Thyroid gland (tissue), 4 donors: ENCODE measurements at regions of chr3 and their contacts with region 1.

Region 1: GRCh38 chr3:30112902-30113484 is 493.4 kb upstream of the TGFBR2 start:
- DNase-seq: no peak
- H3K4me3 ChIP-seq: no peak overlapping the region
- H3K27ac ChIP-seq: no peak overlapping the region
- H3K4me1 ChIP-seq: no peaks in the 10 kb centered on the region
- H3K27me3 ChIP-seq: no peaks in the 10 kb centered on the region
- CTCF ChIP-seq: peak; percentile 20 to 61 (median 47)
- POLR2A ChIP-seq: no peak

Region 2: GRCh38 chr3:30188713-30189112 is 75.7 kb after region 1 on chr3:
- intact Hi-C with region 1: no loop called
- DNase-seq: no peak
- H3K4me3 ChIP-seq: no peak overlapping the region
- H3K27ac ChIP-seq: no peak overlapping the region
- H3K4me1 ChIP-seq: no peaks in the 10 kb centered on the region
- H3K27me3 ChIP-seq: no peaks in the 10 kb centered on the region
- CTCF ChIP-seq: no peak
- POLR2A ChIP-seq: no peak

Region 3: DNA sequence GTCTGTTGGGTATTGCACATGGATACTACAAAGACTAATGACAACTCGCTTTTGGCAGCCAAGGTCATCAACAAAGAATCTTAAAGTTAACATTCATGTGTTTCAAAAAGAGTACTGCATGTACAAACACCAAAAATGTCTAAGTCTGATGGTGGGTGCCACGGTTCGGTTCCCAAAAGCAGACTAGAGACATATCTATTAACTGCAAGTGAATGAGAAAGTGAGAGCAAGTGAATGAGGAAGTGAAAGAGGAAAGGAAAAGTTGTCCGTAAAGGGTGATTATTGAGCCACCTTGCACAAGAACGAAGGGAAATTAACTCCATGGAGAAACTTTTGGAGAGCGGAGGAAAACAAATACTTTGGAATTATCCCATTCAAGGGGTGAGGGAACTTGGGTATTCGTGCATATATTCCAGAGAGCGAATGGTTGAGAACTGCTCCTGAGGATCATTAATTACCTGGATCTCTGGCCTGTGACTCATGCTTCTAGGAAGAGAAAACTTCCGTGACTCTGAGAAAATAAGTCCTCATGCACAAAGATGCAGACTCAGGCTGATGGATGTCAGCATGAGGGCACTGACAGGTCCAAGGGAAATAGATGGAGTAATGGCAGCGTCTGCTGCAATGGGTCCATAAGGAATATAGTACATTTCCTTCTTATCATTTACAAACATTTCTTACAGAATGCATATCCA is 156.9 kb after region 1 on chr3:
- intact Hi-C with region 1: no loop called
- DNase-seq: no peak
- H3K4me3 ChIP-seq: no peak overlapping the region
- H3K27ac ChIP-seq: no peak overlapping the region
- H3K4me1 ChIP-seq: no peaks in the 10 kb centered on the region
- H3K27me3 ChIP-seq: no peaks in the 10 kb centered on the region
- CTCF ChIP-seq: no peak
- POLR2A ChIP-seq: no peak

Region 4: GRCh38 chr3:30370681-30371271 is 257.8 kb after region 1 on chr3:
- intact Hi-C with region 1: no loop called
- DNase-seq: no peak
- H3K4me3 ChIP-seq: no peak overlapping the region
- H3K27ac ChIP-seq: no peak overlapping the region
- H3K4me1 ChIP-seq: no peaks in the 10 kb centered on the region
- H3K27me3 ChIP-seq: no peaks in the 10 kb centered on the region
- CTCF ChIP-seq: no peak
- POLR2A ChIP-seq: no peak

Region 5: GRCh38 chr3:30693470-30694120 is 580.6 kb after region 1 on chr3:
- intact Hi-C with region 1: loop called (anchors 10 kb)
- DNase-seq: peak; percentile 41 to 43
- H3K4me3 ChIP-seq: no peak overlapping the region
- H3K27ac ChIP-seq: no peak overlapping the region
- H3K4me1 ChIP-seq: peaks cover 34 to 48% of the 10 kb centered on the region in 2 donors
- H3K27me3 ChIP-seq: no peaks in the 10 kb centered on the region
- CTCF ChIP-seq: peak; percentile 42 to 90 (median 81)
- POLR2A ChIP-seq: no peak